HEK293 (cell line): ENCODE measurements at regions of chr1 and their contacts with region 1.

Region 1: GRCh38 chr1:64755361-64755760 is 10.5 kb downstream of the RAVER2 start:
- H3K4me3 ChIP-seq: no peak overlapping the region
- H3K27ac ChIP-seq: no peak overlapping the region
- H3K4me1 ChIP-seq: peaks cover 13% of the 10 kb centered on the region; the same call in 1 of the 2 replicates
- CTCF ChIP-seq: peak; percentile 20; the same call in 1 of the 2 replicates

Region 2: DNA sequence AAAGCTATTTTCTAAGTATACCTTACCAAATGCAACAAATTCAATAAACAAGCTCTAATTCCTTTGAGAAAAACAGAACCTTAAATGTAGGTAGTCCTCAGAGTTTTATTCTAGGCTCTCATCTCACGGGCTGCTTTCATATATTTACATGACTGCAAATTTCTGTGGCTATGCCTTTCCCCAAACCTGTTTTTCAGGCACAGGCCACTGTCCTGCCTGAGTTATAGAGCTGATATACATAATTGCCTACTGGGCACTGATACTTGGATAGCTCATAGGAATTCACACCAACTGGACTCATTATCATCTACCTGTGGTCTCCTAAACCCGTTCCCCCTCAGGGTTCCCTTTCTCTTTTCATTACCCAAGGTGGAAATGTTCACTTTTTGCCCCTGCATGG is 31.6 kb before region 1 on chr1:
- CTCF ChIA-PET with region 1: no interaction called
- POLR2A ChIA-PET with region 1: interaction called, 15 read pairs
- H3K4me3 ChIP-seq: no peak overlapping the region
- H3K27ac ChIP-seq: no peak overlapping the region
- H3K4me1 ChIP-seq: no peaks in the 10 kb centered on the region
- CTCF ChIP-seq: no peak

Region 3: DNA sequence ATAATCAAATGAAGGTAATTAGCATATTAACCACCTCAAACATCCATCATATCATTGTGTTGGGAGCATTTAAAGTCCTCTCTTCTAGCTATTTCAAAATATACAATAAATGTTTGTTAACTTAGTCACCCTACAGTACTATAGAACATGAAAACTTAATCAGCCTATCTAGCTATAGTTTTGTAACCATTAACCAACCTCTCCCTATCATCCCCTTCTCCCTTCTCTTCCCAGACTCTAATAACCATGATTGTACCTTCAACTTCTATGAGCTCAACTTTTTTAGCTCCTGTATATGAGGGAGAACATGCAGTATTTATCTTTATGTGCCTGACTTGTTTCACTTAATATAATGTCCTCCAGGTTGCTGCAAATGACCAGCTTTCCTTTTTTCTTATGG is 43.5 kb after region 1 on chr1:
- CTCF ChIA-PET with region 1: no interaction called
- POLR2A ChIA-PET with region 1: no interaction called
- H3K4me3 ChIP-seq: no peak overlapping the region
- H3K27ac ChIP-seq: no peak overlapping the region
- H3K4me1 ChIP-seq: no peaks in the 10 kb centered on the region
- CTCF ChIP-seq: no peak